MCF 10A (cell line): ENCODE measurements at regions of chr6 and their contacts with region 1.

Region 1: GRCh38 chr6:28080631-28081485 is 490 bp downstream of the ZNF165 start:
- DNase-seq: peak; percentile 97
- H3K4me3 Mint-ChIP-seq: peak overlapping the region; percentile 80
- H3K27ac Mint-ChIP-seq: peak overlapping the region; percentile 99
- H3K4me1 Mint-ChIP-seq: peaks cover 13% of the 10 kb centered on the region
- H3K27me3 Mint-ChIP-seq: no peaks in the 10 kb centered on the region
- CTCF ChIP-seq: no peak

Region 2: GRCh38 chr6:27902335-27903314 is 178.2 kb before region 1 on chr6:
- CTCF ChIA-PET with region 1: no interaction called
- POLR2A ChIA-PET with region 1: no interaction called
- intact Hi-C with region 1: loop called (anchors 2 kb)
- DNase-seq: peak; percentile 89
- H3K4me3 Mint-ChIP-seq: peak overlapping the region; percentile 78
- H3K27ac Mint-ChIP-seq: peak overlapping the region; percentile 81
- H3K4me1 Mint-ChIP-seq: peaks cover 5% of the 10 kb centered on the region
- H3K27me3 Mint-ChIP-seq: no peaks in the 10 kb centered on the region
- CTCF ChIP-seq: no peak

Region 3: GRCh38 chr6:28104392-28105244 is 23.8 kb after region 1 on chr6:
- CTCF ChIA-PET with region 1: interaction called, 3 read pairs
- POLR2A ChIA-PET with region 1: interaction called, 18 read pairs
- intact Hi-C with region 1: loop called (anchors 2 kb)
- DNase-seq: peak; percentile 78
- H3K4me3 Mint-ChIP-seq: peak overlapping the region; percentile 83
- H3K27ac Mint-ChIP-seq: peak overlapping the region; percentile 63
- H3K4me1 Mint-ChIP-seq: no peaks in the 10 kb centered on the region
- H3K27me3 Mint-ChIP-seq: no peaks in the 10 kb centered on the region
- CTCF ChIP-seq: peak; percentile 59

Region 4: GRCh38 chr6:28124102-28124970 is 43.5 kb after region 1 on chr6 and contains the start of gene ZSCAN16:
- CTCF ChIA-PET with region 1: no interaction called
- POLR2A ChIA-PET with region 1: interaction called, 3 read pairs
- intact Hi-C with region 1: loop called (anchors 1 kb)
- DNase-seq: peak; percentile 85
- H3K4me3 Mint-ChIP-seq: peak within 1 kb of the TSS; percentile 84
- H3K27ac Mint-ChIP-seq: peak within 1 kb of the TSS; percentile 87
- H3K4me1 Mint-ChIP-seq: peaks cover 41% of the 10 kb centered on the region
- H3K27me3 Mint-ChIP-seq: no peaks in the 10 kb centered on the region
- CTCF ChIP-seq: no peak
- total RNA-seq, gene ZSCAN16: 2.6 and 4.4 TPM in 2 replicates